Activated B cell treated with CpG ODN at 0.5 μM for 24 hours (primary cell): ENCODE measurements at regions of chr3 and their contacts with region 1.

Region 1: DNA sequence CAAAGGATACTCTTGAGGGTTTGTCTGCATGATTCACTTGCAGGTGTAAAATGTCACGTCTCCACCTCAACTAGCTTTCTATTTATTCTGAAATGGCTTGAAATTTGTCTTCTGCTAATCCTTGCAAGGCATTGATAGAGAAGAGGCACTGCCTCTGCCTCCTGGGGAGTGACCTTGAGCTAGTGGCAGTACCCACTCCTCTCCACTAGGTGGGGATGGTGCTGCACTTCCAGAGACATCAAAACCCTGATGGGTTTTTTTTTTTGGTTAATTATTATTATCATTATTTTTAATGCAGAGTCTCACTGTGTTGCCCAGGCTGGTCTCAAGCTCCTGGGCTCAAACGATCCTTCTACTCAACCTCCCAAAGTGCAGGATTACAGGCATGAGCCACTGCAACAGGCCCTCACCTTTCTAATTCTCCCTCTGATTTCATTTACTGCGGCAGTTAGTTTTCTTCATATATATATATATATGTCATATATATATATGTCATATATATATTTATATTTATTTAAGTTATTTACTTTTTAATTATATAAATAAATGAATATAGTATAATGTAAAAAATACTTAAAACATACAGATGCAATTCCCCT is 117.6 kb upstream of the EIF1B start:
- DNase-seq: peak; percentile 26
- ATAC-seq: peak; percentile 82
- H3K4me3 Mint-ChIP-seq: no peak overlapping the region
- H3K27ac Mint-ChIP-seq: no peak overlapping the region
- H3K4me1 Mint-ChIP-seq: no peaks in the 10 kb centered on the region
- H3K27me3 Mint-ChIP-seq: no peaks in the 10 kb centered on the region
- CTCF ChIP-seq: peak; percentile 60

Region 2: DNA sequence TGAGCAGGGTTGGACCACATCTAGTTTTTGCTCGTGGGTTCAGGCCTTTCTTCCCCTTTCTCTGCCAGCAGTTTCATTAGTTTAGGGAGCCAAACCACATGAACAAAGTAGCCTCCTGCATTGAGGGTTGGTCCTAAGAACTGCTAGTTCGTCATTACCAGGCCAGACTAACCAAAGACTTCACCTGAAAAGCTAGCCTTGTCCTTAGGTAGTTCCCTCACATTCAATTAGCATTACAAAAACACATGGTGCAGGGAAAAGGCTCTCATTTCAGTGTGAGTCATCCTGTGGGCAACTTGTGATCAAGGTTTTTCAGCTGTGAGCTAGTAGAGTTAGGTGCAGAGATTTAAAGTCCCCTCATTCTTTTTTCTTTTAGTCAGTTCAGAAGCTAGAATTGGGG is 728.1 kb after region 1 on chr3:
- CTCF ChIA-PET with region 1: no interaction called
- POLR2A ChIA-PET with region 1: no interaction called
- intact Hi-C with region 1: no loop called
- DNase-seq: no peak
- ATAC-seq: peak; percentile 31
- H3K4me3 Mint-ChIP-seq: no peak overlapping the region
- H3K27ac Mint-ChIP-seq: no peak overlapping the region
- H3K4me1 Mint-ChIP-seq: peaks cover 10% of the 10 kb centered on the region
- H3K27me3 Mint-ChIP-seq: no peaks in the 10 kb centered on the region
- CTCF ChIP-seq: no peak

Region 3: GRCh38 chr3:41881233-41881821 is 1689.4 kb after region 1 on chr3:
- CTCF ChIA-PET with region 1: interaction called, 3 read pairs
- POLR2A ChIA-PET with region 1: no interaction called
- intact Hi-C with region 1: loop called (anchors 1 kb)
- DNase-seq: no peak
- ATAC-seq: no peak
- H3K4me3 Mint-ChIP-seq: no peak overlapping the region
- H3K27ac Mint-ChIP-seq: no peak overlapping the region
- H3K4me1 Mint-ChIP-seq: no peaks in the 10 kb centered on the region
- H3K27me3 Mint-ChIP-seq: no peaks in the 10 kb centered on the region
- CTCF ChIP-seq: peak; percentile 74